ENCODE measurements at regions of chr1 and their contacts with region 1.

Region 1: DNA sequence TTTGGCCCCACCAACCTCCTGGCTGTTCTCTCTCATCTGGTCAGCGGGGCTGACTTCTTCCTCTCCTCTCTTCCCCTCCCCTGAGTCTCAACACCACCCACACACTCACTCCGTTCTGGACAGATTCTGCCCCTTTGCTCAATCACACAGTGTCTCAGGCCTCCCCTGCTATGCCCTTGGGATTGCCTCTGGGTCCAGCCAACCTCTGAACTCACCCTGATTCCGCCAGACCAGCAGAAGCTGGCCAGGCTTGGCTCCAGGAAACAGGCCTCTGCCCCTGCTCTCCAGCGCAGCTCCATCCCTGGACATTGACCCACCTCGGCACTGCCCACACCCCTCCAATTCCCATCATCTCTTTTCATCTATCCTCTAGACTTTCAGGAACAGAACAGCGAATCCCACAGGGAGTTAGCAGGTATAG is 22.1 kb downstream of the AHDC1 start:
- DNase-seq: no peak
- ATAC-seq: no peak
- H3K4me3 ChIP-seq: no peak overlapping the region
- H3K4me3 Mint-ChIP-seq: no peak overlapping the region
- H3K27ac ChIP-seq: no peak overlapping the region
- H3K27ac Mint-ChIP-seq: no peak overlapping the region
- H3K4me1 ChIP-seq: no peaks in the 10 kb centered on the region
- H3K4me1 Mint-ChIP-seq: peaks cover 18% of the 10 kb centered on the region
- H3K27me3 ChIP-seq: no peaks in the 10 kb centered on the region
- H3K27me3 Mint-ChIP-seq: no peaks in the 10 kb centered on the region
- CTCF ChIP-seq: no peak

Region 2: DNA sequence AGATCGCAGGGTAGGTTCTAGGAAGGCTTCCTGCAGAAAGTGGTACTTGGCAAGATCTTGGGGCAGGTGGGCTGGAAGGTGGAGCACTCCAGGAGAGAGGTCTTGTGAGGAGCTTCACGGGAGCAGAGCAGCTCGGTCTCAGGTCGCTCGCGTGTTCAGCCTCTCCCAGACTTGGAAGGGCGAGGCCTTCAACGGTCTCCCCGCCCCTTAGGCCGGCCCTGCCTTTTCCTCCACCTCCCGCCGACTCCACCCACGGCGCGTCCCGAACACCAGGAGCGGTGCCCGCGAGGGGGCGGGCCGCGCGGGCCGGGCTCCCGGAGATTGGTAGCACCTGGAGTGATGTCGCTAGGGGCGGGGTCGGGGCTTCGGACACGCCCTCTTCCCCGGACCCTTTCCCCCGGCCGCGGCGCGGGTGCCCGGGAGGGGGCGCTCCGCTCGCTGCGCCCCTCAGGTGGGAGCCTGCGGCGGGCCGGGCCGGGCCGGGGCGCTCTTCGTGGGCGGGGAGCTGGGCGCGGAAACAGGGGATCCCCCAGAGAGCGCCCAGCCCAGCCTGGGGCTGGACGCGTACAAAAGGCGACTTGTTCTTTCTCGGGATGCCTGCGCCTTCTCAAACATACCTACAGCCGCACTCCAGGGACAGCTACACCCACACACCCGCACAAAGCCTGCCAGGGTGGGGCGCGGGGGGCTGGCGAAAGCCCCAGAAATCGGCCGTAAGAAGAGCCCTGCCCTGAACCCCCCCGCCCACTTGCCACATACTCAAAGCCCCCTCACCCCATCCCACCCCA is 13.3 kb before region 1 on chr1:
- CTCF ChIA-PET with region 1: interaction called, 16 read pairs
- POLR2A ChIA-PET with region 1: no interaction called
- intact Hi-C with region 1: no loop called
- DNase-seq: peak; percentile 80 to 96 (median 91)
- ATAC-seq: peak; percentile 92
- H3K4me3 ChIP-seq: peak overlapping the region; percentile 28 to 36
- H3K4me3 Mint-ChIP-seq: peak overlapping the region; percentile 78
- H3K27ac ChIP-seq: peak overlapping the region in 1 of 2 experiments; percentile 58
- H3K27ac Mint-ChIP-seq: peak overlapping the region; percentile 39
- H3K4me1 ChIP-seq: peaks cover 16% of the 10 kb centered on the region
- H3K4me1 Mint-ChIP-seq: peaks cover 25% of the 10 kb centered on the region
- H3K27me3 ChIP-seq: no peaks in the 10 kb centered on the region
- H3K27me3 Mint-ChIP-seq: no peaks in the 10 kb centered on the region
- CTCF ChIP-seq: peak; percentile 71